PC-9 (cell line): ENCODE measurements at regions of chr2 and their contacts with region 1.

Region 1: GRCh38 chr2:17164550-17164949 is 353.7 kb downstream of the RAD51AP2 start:
- DNase-seq: no peak
- H3K4me3 ChIP-seq: no peak overlapping the region
- H3K27ac ChIP-seq: no peak overlapping the region
- H3K4me1 ChIP-seq: no peaks in the 10 kb centered on the region; the same call in 1 of the 2 replicates
- H3K27me3 ChIP-seq: no peaks in the 10 kb centered on the region
- CTCF ChIP-seq: no peak

Region 2: DNA sequence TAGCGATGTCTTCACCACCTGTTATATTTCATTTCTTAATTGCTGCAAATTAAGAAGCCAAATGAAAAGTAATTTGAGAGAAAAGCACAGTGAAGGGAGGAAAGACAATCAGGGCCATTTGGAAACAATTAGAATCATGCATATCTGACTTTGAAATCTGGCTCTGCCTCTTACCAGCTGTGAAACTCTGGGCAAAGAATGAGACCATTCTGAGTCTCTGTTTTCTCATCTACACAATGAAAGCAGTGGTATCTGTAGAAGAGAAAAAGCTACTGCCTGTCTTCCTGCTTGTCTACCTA is 164.4 kb before region 1 on chr2:
- CTCF ChIA-PET with region 1: no interaction called
- POLR2A ChIA-PET with region 1: interaction called, 10 read pairs
- intact Hi-C with region 1: no loop called
- DNase-seq: no peak
- H3K4me3 ChIP-seq: no peak overlapping the region
- H3K27ac ChIP-seq: no peak overlapping the region
- H3K4me1 ChIP-seq: no peaks in the 10 kb centered on the region
- H3K27me3 ChIP-seq: no peaks in the 10 kb centered on the region
- CTCF ChIP-seq: no peak

Region 3: GRCh38 chr2:17148407-17149145 is 16.0 kb before region 1 on chr2:
- CTCF ChIA-PET with region 1: no interaction called
- POLR2A ChIA-PET with region 1: no interaction called
- intact Hi-C with region 1: no loop called
- DNase-seq: no peak
- H3K4me3 ChIP-seq: no peak overlapping the region
- H3K27ac ChIP-seq: no peak overlapping the region
- H3K4me1 ChIP-seq: no peaks in the 10 kb centered on the region
- H3K27me3 ChIP-seq: no peaks in the 10 kb centered on the region
- CTCF ChIP-seq: no peak; the same call in 1 of the 2 replicates